CD8-positive, alpha-beta T cell (primary cell): ENCODE measurements at regions of chr9 and their contacts with region 1.

Region 1: DNA sequence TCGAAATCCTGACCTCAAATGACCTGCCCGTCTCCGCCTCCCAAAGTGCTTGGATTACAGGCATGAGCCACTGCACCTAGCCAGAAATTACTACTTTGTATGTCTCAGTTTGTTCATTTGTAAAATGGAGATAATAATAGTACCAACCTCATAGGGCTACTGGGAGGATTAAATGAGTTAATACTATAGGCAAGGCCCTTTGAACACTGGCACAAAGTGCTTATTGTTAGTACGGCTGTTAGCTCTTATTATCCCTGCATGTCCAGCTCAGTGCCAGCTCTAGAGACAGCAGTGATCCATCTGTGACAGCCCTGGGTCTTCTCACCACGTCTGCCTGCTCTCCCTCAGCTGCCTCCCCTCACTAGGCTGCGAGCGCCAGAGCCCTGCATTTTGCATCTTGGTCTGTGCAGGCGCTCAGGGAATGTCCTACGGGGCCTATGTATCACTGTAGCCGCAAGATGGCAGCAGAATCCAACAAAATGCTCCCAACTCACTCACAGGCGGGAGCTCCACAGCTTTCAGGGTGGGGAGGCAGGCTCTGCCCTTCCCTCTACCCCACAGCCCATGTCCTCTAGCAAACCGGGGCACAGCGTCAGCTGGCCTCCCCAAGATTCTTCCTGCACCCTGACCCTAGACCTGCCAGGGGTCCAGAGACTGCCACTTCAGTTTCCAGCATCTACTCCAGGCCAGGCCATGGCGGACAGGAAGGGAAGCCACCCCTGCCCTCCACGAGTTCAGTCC is 17.7 kb upstream of the AKNA start:
- DNase-seq: peak; percentile 65 to 91 (median 81)
- ATAC-seq: peak; percentile 99
- H3K4me3 ChIP-seq: no peak overlapping the region
- H3K4me3 Mint-ChIP-seq: no peak overlapping the region
- H3K27ac ChIP-seq: no peak overlapping the region
- H3K27ac Mint-ChIP-seq: peak overlapping the region; percentile 14
- H3K4me1 ChIP-seq: peaks cover 11% of the 10 kb centered on the region
- H3K4me1 Mint-ChIP-seq: peaks cover 7% of the 10 kb centered on the region
- H3K27me3 ChIP-seq: no peaks in the 10 kb centered on the region
- H3K27me3 Mint-ChIP-seq: no peaks in the 10 kb centered on the region
- CTCF ChIP-seq: peak; percentile 64

Region 2: DNA sequence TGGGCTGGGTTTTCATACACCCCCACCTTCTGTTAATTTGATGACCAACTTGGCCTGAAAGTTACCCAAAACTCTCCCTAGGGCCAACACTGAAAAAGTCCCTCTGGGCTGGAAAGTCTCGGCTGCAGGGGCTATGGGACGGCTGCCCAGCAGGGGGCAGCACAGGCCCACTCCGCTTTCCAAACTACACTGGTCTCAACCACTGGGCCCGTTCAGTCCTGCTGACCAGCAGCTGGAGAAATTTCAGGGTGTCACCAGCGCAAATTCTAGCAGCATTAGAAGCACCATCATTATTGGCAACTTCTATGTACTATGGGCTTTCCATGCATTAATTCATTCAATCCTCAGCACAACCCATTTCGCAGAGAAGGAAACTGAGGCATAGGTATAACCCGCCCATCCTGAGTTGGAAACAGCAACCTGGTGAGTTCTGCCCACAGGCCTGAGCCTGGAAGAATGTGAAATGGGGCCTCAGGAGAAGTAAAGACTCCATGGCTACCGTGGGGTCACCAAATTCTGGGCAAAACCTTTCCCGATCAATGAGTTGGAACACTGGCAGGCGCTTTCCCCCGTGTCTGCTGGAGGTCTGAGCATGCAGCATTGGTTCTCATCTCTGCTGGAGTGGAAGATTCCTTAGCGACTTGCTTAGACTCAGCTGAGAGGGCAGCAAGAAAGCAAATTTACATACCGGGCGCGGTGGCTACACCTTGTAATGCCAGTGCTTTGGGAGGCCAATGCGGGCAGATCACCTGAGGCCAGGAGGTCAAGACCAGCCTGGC is 66.1 kb before region 1 on chr9:
- CTCF ChIA-PET with region 1: interaction called, 14 read pairs
- POLR2A ChIA-PET with region 1: no interaction called
- intact Hi-C with region 1: loop called (anchors 2 kb)
- DNase-seq: peak; percentile 27 to 76 (median 52)
- ATAC-seq: peak; percentile 65
- H3K4me3 ChIP-seq: no peak overlapping the region
- H3K4me3 Mint-ChIP-seq: no peak overlapping the region
- H3K27ac ChIP-seq: peak overlapping the region in 1 of 2 experiments; percentile 40
- H3K27ac Mint-ChIP-seq: peak overlapping the region; percentile 45
- H3K4me1 ChIP-seq: no peaks in the 10 kb centered on the region
- H3K4me1 Mint-ChIP-seq: peaks cover 34% of the 10 kb centered on the region
- H3K27me3 ChIP-seq: no peaks in the 10 kb centered on the region
- H3K27me3 Mint-ChIP-seq: no peaks in the 10 kb centered on the region
- CTCF ChIP-seq: peak; percentile 83

Region 3: DNA sequence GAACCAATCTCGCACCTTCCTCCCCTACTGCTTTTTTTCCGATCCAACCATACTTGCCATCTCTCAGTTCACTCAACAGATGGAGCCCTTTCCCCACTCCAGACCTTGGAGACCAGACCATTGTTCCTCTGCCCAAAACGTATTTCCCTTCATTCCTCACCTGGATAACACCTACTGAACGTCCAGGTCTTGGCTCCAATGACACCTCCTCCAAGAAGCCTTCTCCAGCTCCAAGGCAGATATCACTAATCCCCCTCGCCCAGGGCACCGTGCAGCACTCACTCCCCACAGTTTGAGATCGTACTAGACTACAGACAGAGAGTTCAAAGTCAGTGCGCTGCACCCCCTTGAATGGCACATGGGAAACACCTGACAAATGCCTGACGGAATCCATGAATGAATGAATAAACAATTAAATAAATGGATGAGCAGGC is 29.4 kb after region 1 on chr9:
- CTCF ChIA-PET with region 1: interaction called, 14 read pairs
- POLR2A ChIA-PET with region 1: no interaction called
- intact Hi-C with region 1: no loop called
- DNase-seq: peak in 3 of 9 experiments; percentile 25 to 43 (median 43)
- ATAC-seq: no peak
- H3K4me3 ChIP-seq: no peak overlapping the region
- H3K4me3 Mint-ChIP-seq: no peak overlapping the region
- H3K27ac ChIP-seq: no peak overlapping the region
- H3K27ac Mint-ChIP-seq: no peak overlapping the region
- H3K4me1 ChIP-seq: no peaks in the 10 kb centered on the region
- H3K4me1 Mint-ChIP-seq: peaks cover 5% of the 10 kb centered on the region
- H3K27me3 ChIP-seq: no peaks in the 10 kb centered on the region
- H3K27me3 Mint-ChIP-seq: no peaks in the 10 kb centered on the region
- CTCF ChIP-seq: no peak

Region 4: DNA sequence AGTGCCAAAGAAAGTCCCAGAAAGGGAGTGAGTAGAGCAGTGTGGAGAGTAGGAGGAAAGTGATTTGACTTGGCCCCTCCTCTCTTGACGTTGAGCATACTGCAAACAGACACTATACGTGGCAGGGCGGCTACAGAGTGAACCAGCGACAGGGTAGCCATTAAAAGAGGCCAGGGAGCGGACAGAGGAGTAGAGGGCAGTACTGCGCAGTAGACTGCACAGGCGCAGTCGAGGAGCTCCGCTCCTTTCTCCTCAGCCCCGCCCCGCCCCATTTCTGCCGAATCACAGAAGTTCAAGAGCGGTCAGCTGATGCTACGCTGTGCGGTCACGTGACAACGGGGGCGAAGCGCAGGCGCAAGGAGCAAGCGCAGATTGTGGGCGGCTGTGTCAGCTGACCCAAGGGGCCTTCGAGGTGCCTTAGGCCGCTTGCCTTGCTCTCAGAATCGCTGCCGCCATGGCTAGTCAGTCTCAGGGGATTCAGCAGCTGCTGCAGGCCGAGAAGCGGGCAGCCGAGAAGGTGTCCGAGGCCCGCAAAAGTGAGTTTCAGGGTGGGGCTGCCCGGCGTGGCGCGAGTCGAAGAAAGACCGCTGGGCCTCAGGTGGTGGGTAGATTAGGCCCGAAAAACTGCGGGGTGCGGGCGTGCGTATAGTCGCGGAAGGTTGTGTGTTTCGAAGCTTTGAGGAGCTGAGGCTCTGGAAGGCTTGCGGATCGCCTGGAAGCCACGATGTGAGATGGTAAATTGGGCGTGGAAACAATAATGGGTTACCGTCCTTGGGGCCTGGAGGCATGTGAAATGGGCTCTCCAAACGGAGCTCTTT is 182.1 kb after region 1 on chr9 and contains the start of gene ATP6V1G1:
- CTCF ChIA-PET with region 1: interaction called, 17 read pairs
- POLR2A ChIA-PET with region 1: interaction called, 6 read pairs
- intact Hi-C with region 1: loop called (anchors 1 to 5 kb)
- DNase-seq: peak; percentile 96 to 100 (median 99)
- ATAC-seq: peak; percentile 92
- H3K4me3 ChIP-seq: peak within 1 kb of the TSS; percentile 79 to 93
- H3K4me3 Mint-ChIP-seq: peak within 1 kb of the TSS; percentile 99
- H3K27ac ChIP-seq: peak within 1 kb of the TSS; percentile 88 to 94
- H3K27ac Mint-ChIP-seq: peak within 1 kb of the TSS; percentile 100
- H3K4me1 ChIP-seq: peaks cover 36% of the 10 kb centered on the region
- H3K4me1 Mint-ChIP-seq: peaks cover 47% of the 10 kb centered on the region
- H3K27me3 ChIP-seq: no peaks in the 10 kb centered on the region
- H3K27me3 Mint-ChIP-seq: no peaks in the 10 kb centered on the region
- CTCF ChIP-seq: no peak
- total RNA-seq, gene ATP6V1G1: 141 to 147 TPM

Region 5: DNA sequence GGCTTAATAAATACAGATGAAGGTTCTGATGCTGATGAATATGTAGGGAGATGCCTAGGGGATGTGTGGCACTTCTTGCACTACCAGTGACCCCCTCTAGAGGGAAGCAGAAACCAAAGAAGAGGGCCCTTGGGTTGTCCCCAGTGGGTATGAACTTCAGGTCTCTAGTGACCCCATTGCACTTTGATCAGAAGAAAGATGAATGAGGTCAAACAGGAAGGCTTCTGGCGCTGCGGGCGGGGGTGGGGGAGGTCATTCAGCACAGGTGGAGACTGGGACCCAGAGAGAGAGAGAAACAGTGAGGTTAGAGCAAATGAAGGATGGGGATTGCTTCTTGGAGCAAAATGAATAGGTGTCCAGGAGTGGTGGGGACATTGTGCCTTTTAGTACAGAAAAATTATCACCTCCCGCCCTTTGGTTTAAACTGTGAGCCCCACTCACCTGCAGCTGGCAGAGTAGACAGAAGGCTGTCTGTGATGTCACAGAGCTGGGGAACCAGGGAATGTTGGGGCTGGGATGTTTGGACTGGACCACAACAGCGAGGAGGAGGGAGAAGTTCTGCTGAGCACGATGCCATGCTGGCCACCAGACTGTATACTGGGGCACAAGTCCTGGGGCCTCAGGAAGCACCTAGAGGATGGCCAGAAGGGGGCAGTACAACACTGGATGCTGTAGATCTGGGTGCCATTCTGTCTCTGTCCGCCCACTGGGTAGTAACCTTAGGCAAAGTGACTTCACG is 276.3 kb after region 1 on chr9 and contains the start of gene TEX48:
- CTCF ChIA-PET with region 1: interaction called, 17 read pairs
- POLR2A ChIA-PET with region 1: no interaction called
- intact Hi-C with region 1: no loop called
- DNase-seq: peak; percentile 48 to 89 (median 74)
- ATAC-seq: peak; percentile 89
- H3K4me3 ChIP-seq: no peak within 1 kb of the TSS
- H3K4me3 Mint-ChIP-seq: peak within 1 kb of the TSS; percentile 30
- H3K27ac ChIP-seq: no peak within 1 kb of the TSS
- H3K27ac Mint-ChIP-seq: peak within 1 kb of the TSS; percentile 25
- H3K4me1 ChIP-seq: peaks cover 5% of the 10 kb centered on the region
- H3K4me1 Mint-ChIP-seq: peaks cover 13% of the 10 kb centered on the region
- H3K27me3 ChIP-seq: peaks cover 0 to under 1% of the 10 kb centered on the region in 2 experiments
- H3K27me3 Mint-ChIP-seq: peaks cover 5% of the 10 kb centered on the region
- CTCF ChIP-seq: peak; percentile 58
- total RNA-seq, gene TEX48: not detected

Region 6: GRCh38 chr9:115013998-115014397 is 608.5 kb after region 1 on chr9:
- CTCF ChIA-PET with region 1: interaction called, 34 read pairs
- POLR2A ChIA-PET with region 1: no interaction called
- intact Hi-C with region 1: loop called (anchors 1 to 2 kb)
- DNase-seq: peak; percentile 60 to 86 (median 79)
- ATAC-seq: peak; percentile 79
- H3K4me3 ChIP-seq: no peak overlapping the region
- H3K4me3 Mint-ChIP-seq: no peak overlapping the region
- H3K27ac ChIP-seq: no peak overlapping the region
- H3K27ac Mint-ChIP-seq: no peak overlapping the region
- H3K4me1 ChIP-seq: peaks cover 7% of the 10 kb centered on the region
- H3K4me1 Mint-ChIP-seq: peaks cover 9% of the 10 kb centered on the region
- H3K27me3 ChIP-seq: no peaks in the 10 kb centered on the region
- H3K27me3 Mint-ChIP-seq: no peaks in the 10 kb centered on the region
- CTCF ChIP-seq: peak; percentile 89